WTC11 (cell line): ENCODE measurements at regions of chr11 and their contacts with region 1.

Region 1: DNA sequence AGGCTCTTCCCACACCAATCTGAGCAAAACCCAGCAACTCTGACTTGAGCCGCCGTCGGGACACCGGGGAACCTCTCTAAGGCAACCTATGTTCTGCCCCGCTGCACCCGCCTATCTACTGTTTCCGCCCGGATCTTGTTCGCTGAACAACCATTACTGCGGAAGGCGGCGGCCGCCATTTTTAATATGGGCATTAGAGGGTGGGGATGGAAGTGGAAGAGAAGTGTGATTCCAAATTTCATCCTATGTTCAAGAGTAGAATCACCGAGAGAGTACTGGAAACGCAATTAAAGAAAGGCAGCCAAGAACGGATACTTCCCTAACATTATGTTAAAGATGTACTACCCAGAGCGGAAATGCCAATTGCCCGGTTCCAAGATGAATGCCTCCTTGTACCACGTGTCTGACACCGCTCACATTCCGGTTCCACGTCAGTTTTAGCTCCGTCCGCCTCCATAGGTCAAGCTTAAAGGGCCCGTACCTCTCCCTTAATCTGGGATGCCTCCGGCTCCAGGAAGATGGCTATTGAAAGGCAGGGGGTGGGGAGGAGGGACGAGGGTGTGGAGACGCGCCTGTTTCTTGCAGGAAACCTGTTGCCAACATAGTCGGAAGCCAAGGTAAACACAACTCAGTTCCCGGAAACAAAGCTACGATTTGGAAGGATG is at the start of gene DPAGT1:
- DNase-seq: peak; percentile 88
- ATAC-seq: peak; percentile 83
- H3K4me3 Mint-ChIP-seq: peak within 1 kb of the TSS; percentile 92
- H3K27ac Mint-ChIP-seq: peak within 1 kb of the TSS; percentile 100
- H3K4me1 Mint-ChIP-seq: peaks cover 33% of the 10 kb centered on the region
- H3K27me3 Mint-ChIP-seq: no peaks in the 10 kb centered on the region; the same call in 1 of the 2 replicates
- CTCF ChIP-seq: no peak
- total RNA-seq, gene DPAGT1: 59.6 to 64.6 TPM (median 63.5 TPM) in 3 replicates

Region 2: GRCh38 chr11:119084663-119085436 is 17.0 kb before region 1 on chr11 and contains the start of gene HMBS:
- CTCF ChIA-PET with region 1: interaction called, 5 read pairs
- POLR2A ChIA-PET with region 1: interaction called, 19 read pairs
- DNase-seq: peak; percentile 87
- ATAC-seq: peak; percentile 89
- H3K4me3 Mint-ChIP-seq: peak within 1 kb of the TSS; percentile 98
- H3K27ac Mint-ChIP-seq: peak within 1 kb of the TSS; percentile 98
- H3K4me1 Mint-ChIP-seq: peaks cover 3% of the 10 kb centered on the region; the same call in 1 of the 2 replicates
- H3K27me3 Mint-ChIP-seq: no peaks in the 10 kb centered on the region
- CTCF ChIP-seq: no peak
- total RNA-seq, gene HMBS: 55.4 to 64.4 TPM (median 62.3 TPM) in 3 replicates

Region 3: GRCh38 chr11:119161871-119162623 is 60.2 kb after region 1 on chr11:
- CTCF ChIA-PET with region 1: no interaction called
- POLR2A ChIA-PET with region 1: no interaction called
- DNase-seq: no peak
- ATAC-seq: no peak
- H3K4me3 Mint-ChIP-seq: no peak overlapping the region
- H3K27ac Mint-ChIP-seq: no peak overlapping the region
- H3K4me1 Mint-ChIP-seq: peaks cover 16% of the 10 kb centered on the region
- H3K27me3 Mint-ChIP-seq: no peaks in the 10 kb centered on the region; the same call in 1 of the 2 replicates
- CTCF ChIP-seq: no peak

Region 4: DNA sequence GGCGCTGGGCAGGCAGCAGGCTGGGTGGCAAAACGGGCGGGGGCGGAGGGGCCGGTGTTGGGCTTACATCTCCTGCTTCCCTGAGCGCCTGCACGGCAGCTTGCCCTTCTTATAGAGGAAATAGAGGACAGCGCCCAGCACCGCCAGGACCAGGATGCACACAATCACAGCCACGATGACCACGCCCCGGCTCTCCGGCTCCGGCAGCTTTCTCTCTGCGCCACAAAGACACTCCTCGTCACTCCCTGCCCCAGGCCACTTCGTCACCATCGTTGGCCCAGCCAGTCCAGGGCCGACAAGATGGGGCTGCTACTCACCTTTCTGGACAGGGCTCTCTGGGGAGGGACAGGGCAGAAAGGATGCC is 208.8 kb after region 1 on chr11:
- CTCF ChIA-PET with region 1: no interaction called
- POLR2A ChIA-PET with region 1: no interaction called
- DNase-seq: no peak
- ATAC-seq: no peak
- H3K4me3 Mint-ChIP-seq: no peak overlapping the region
- H3K27ac Mint-ChIP-seq: no peak overlapping the region
- H3K4me1 Mint-ChIP-seq: peaks cover 23% of the 10 kb centered on the region
- H3K27me3 Mint-ChIP-seq: peaks cover 15% of the 10 kb centered on the region
- CTCF ChIP-seq: no peak

Region 5: DNA sequence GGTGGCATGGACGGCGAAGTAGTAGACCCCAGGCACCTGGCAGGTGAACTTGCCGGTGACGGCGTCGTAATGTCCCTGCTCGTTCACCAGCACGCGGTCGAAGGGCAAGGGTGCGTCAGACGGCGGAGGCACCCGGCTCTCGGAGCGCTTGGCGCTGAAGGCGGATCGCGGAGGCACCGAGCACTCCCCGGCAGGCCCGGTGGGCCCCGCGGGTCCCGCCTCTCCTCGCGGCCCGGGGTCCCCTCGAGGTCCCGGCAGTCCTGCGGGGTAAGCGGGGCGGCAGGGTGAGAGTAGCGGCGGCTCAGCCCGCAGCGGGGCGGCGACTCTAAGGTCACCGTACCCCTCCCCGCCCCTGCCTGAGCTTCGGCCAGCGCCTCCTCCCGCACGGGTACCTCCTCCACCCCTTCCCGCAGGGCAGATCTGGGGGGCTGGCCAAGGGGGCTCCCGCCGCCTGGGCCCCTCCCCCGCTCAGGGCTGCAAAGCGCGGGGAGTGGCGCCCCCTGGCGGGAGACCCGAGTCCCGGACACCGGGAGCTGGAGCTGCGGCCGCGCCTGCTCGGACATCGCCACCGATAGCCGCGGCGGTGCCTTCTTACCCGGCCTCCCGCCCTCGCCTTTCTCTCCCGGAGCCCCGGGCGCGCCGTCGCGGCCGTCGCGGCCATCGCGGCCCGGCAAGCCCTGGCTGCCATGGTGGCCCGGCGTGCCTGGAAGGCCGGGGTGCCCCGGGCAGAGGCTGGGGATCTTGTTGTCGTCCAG is 237.9 kb after region 1 on chr11:
- CTCF ChIA-PET with region 1: interaction called, 15 read pairs
- POLR2A ChIA-PET with region 1: no interaction called
- DNase-seq: peak; percentile 85
- ATAC-seq: peak; percentile 12
- H3K4me3 Mint-ChIP-seq: peak overlapping the region; percentile 100
- H3K27ac Mint-ChIP-seq: no peak overlapping the region
- H3K4me1 Mint-ChIP-seq: peaks cover 52% of the 10 kb centered on the region
- H3K27me3 Mint-ChIP-seq: peaks cover 53% of the 10 kb centered on the region
- CTCF ChIP-seq: peak; percentile 97